IMR-90 (cell line): ENCODE measurements at regions of chr11 and their contacts with region 1.

Region 1: DNA sequence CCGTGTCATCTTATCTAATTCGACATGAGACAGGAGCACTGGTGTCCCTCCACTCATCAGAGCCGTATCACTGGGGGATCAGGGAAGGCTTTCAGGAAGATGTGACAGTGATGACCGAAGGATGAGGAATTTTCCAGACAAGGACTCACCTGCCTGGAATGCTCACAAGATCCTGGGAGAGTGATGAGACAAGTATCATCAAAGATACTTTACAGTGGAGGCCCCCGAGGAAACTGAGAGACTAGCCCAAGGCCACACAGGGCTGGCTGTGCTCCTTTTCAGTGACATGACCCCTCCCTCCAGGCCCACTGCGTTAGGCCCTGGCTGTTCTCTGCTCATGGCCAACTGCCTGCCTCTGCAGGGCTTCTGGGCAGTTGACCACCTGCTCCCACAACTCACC is 13.0 kb downstream of the CLPB start:
- DNase-seq: peak; percentile 20
- ATAC-seq: no peak
- H3K4me3 ChIP-seq: no peak overlapping the region
- H3K27ac ChIP-seq: no peak overlapping the region
- H3K4me1 ChIP-seq: peaks cover 6% of the 10 kb centered on the region; the same call in 1 of the 2 replicates
- H3K27me3 ChIP-seq: no peaks in the 10 kb centered on the region
- CTCF ChIP-seq: no peak
- POLR2A ChIP-seq: no peak
- RAD21 ChIP-seq: no peak

Region 2: DNA sequence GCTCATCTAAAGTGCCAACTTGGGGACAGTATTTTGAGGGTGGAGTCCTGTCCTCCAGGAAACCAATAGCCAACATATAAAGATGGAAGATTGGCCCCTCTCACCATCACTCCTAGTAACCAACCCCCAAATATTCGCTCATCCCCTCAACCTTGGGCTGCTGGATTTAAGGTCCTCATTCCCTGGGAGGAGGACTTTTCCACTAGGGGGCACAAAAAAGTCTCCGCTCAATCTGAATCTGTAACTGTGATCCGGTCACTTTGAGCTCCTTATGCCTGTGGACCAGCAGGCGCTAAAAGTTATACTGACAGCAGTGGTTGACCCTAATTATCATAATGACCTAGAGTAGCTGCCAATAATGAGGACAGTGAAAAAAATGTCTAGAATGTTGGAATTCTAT is 33.4 kb after region 1 on chr11:
- CTCF ChIA-PET with region 1: no interaction called
- POLR2A ChIA-PET with region 1: interaction called, 14 read pairs
- dilution Hi-C with region 1: no loop called
- in situ Hi-C with region 1: no loop called
- intact Hi-C with region 1: no loop called
- DNase-seq: no peak
- ATAC-seq: no peak
- H3K4me3 ChIP-seq: no peak overlapping the region
- H3K27ac ChIP-seq: no peak overlapping the region
- H3K4me1 ChIP-seq: no peaks in the 10 kb centered on the region
- H3K27me3 ChIP-seq: peaks cover 54% of the 10 kb centered on the region
- CTCF ChIP-seq: no peak
- POLR2A ChIP-seq: no peak
- RAD21 ChIP-seq: no peak

Region 3: DNA sequence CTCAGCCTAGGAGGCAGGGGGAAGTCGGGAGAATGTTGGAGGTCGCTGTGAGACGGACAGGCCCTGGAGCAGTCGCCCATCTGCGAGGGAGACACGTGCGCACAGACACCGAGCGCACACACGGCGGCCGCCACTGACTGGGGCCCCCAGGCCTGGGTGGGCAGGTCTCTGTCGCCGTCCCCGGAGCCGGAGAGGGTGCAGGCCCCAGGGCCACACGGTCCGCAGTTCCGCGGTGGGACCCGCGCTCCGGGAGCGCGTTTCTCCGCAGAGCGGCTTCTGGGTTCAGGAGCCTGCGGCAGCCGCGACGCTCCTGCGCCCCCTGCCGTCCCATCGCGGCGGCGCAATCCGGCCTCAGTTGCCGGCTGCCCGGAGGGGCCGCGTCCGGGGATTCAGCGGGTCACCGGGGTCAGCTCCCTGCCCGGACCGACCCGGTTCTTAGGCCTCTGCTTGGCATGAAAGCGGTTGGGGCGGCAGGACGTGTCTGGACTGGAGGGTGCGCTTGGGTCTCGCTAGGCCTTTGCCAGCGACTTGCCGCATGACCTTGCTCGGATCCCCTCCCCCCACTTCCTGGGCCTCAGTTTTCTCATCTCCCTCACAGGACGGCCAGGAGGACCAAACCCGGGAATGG is 221.6 kb after region 1 on chr11:
- CTCF ChIA-PET with region 1: no interaction called
- POLR2A ChIA-PET with region 1: no interaction called
- dilution Hi-C with region 1: no loop called
- in situ Hi-C with region 1: no loop called
- intact Hi-C with region 1: no loop called
- DNase-seq: peak; percentile 11
- ATAC-seq: peak; percentile 87
- H3K4me3 ChIP-seq: no peak overlapping the region; the same call in 1 of the 2 replicates
- H3K27ac ChIP-seq: no peak overlapping the region
- H3K4me1 ChIP-seq: peaks cover 2% of the 10 kb centered on the region; the same call in 1 of the 2 replicates
- H3K27me3 ChIP-seq: peaks cover 55% of the 10 kb centered on the region
- CTCF ChIP-seq: peak; percentile 84
- POLR2A ChIP-seq: no peak
- RAD21 ChIP-seq: peak; percentile 72